ENCODE measurements at regions of chr21 and their contacts with region 1.

Region 1: GRCh38 chr21:34603002-34603709 is 11.8 kb downstream of the RCAN1 start:
- DNase-seq: peak; percentile 84 to 87
- ATAC-seq: peak; percentile 84 to 97 (median 94)
- H3K4me3 ChIP-seq: no peak overlapping the region
- H3K27ac ChIP-seq: no peak overlapping the region
- H3K4me1 ChIP-seq: no peaks in the 10 kb centered on the region
- H3K27me3 ChIP-seq: no peaks in the 10 kb centered on the region
- CTCF ChIP-seq: peak; percentile 72

Region 2: GRCh38 chr21:34510148-34511142 is 92.7 kb before region 1 on chr21:
- intact Hi-C with region 1: loop called in 1 of 2 experiments (anchors 1 kb)
- DNase-seq: peak; percentile 73 to 83
- ATAC-seq: peak; percentile 72 to 86 (median 79)
- H3K4me3 ChIP-seq: no peak overlapping the region
- H3K27ac ChIP-seq: no peak overlapping the region
- H3K4me1 ChIP-seq: no peaks in the 10 kb centered on the region
- H3K27me3 ChIP-seq: no peaks in the 10 kb centered on the region
- CTCF ChIP-seq: peak; percentile 67